ENCODE measurements at regions of chr3 and their contacts with region 1.

Region 1: GRCh38 chr3:193572426-193572908 is 17.8 kb upstream of the ATP13A4 start:
- DNase-seq: peak; percentile 58
- CTCF ChIP-seq: peak; percentile 70

Region 2: DNA sequence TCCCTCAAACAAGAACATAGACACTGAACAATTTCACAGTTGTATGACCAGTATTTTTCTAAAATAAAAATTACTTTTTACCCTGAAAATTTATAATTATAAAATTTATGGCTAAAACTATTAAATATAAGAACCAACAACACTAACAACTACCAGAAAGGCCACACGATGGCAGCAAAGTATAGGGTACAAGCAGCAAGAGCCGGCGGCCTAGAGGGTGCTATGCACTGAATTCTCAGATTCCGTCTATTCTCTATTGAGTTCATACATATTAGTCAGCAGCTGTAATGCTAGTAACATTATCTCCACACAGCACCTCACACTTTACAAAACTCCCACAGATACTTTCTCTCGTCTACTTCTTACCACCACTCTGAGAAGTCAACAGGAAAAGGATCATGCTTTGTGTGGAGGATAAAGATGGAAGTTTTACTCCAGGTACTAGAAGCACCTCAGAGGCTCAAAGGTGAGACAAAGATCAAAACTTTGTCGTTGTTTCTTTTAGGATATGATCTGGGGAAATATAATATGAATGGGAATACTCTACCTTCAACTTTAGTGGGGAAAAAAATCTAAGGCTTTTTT is 1005.7 kb before region 1 on chr3:
- in situ Hi-C with region 1: loop called (anchors 25 kb)
- DNase-seq: peak; percentile 55
- CTCF ChIP-seq: peak; percentile 39

Region 3: DNA sequence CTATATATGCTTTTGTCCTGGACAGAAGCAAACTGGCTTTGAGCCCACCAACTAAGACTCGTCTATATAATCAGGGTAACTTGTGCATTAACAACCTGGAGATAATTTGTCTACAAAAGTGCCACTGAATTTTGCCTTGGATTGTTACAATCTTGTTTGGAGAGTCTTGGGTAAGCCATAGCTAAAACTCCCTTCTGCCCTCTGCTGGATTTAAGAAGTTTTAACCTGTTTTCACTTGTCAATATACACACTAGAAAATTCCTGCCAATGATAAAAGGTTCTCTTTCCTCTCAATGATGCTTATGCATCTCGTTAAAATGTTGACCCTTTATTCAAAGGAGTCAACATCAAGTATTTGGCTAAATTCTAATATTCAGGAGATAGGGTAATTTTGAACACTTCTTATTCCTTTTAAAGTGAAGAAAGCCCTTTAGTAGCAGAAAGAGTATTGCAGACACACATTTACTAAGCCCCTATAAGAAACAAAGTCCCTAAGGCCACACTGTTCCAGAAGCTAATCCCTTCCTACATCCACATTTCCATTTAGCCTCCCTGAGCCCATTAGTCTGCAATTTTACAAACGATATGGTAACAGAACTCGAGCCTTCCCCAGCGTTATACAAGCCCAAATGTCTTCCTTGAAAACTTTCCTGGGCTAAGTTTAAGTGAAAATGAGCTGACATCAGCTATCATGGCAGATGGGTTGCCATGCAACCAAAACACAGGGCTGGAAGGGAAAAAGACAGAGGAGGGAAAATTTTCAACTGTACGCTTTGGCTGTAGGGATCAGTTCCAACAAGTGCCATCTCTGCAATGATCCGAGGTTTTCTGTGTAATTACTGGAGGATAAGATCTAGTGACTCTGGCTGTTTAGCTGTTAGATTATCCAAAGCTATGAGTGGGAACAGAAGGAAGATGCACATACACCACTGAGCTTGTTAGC is 769.2 kb before region 1 on chr3:
- in situ Hi-C with region 1: loop called (anchors 25 kb)
- DNase-seq: peak; percentile 32
- CTCF ChIP-seq: no peak

Region 4: GRCh38 chr3:193040836-193041672 is 531.4 kb before region 1 on chr3:
- in situ Hi-C with region 1: loop called (anchors 25 kb)
- DNase-seq: peak; percentile 53
- CTCF ChIP-seq: peak; percentile 23

Region 5: DNA sequence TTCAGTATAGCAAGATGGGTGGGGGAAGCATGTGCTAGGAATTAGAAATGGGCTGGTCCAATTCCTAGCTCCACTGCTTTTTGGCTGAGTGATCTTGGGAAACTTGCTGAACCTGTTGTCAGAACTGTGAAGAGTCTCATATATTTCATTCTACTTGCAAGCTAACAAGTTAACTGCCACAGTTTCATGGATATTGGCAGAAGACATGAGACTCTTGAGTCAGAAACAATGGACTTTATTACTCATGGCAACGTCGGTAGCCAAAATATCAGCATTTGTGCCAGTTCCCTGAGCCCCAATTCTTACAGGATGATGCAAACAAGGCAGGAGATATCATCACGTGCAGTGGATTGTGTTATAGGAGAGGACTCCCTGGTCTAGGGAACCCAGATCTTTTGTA is 358.0 kb before region 1 on chr3:
- in situ Hi-C with region 1: no loop called
- DNase-seq: no peak
- CTCF ChIP-seq: no peak

Measured in GM13976 (cell line).